Posterior vena cava (tissue), 2 donors: ENCODE measurements at regions of chr14 and their contacts with region 1.

Region 1: DNA sequence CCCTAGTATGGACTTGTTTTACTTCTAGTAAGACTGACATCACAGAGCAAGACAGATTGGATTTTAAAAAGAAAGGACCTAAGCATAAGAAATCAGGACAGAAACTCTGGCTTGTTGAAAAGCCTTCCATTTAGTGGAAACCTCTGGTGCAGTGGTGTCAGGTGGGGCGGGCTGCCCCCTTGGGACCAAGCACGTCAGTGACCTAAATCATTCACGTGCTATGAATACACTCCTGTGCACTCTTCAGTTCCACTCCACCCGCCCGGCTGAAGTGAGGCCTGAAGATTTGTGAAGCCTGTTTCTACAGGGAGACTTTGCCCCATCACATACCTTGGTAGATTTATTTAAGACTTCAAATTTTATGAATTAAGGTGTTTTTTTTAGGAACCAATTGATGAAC is 58.2 kb upstream of the STRN3 start:
- DNase-seq: no peak

Region 2: GRCh38 chr14:30840086-30840779 is 244.2 kb before region 1 on chr14:
- intact Hi-C with region 1: no loop called
- DNase-seq: no peak

Region 3: DNA sequence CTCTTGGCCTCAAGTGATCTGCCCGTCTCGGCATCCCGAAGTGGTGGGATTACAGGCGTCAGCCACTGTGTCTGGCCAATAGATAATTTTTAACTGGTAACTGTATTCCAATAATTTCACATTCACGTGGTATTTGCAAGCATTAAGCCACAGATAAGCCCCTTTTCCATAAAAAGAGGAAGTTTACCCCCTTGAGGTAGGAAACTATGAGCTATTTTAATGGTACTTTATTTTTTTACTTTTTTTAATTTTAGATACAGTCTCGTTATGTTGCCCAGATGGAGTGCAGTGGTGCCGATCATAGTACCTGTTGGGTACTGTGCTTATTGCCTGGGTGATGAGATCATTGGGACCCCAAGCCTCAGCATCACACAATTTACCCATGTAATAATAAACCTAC is 101.9 kb before region 1 on chr14:
- intact Hi-C with region 1: loop called (anchors 5 to 10 kb)
- DNase-seq: no peak

Region 4: DNA sequence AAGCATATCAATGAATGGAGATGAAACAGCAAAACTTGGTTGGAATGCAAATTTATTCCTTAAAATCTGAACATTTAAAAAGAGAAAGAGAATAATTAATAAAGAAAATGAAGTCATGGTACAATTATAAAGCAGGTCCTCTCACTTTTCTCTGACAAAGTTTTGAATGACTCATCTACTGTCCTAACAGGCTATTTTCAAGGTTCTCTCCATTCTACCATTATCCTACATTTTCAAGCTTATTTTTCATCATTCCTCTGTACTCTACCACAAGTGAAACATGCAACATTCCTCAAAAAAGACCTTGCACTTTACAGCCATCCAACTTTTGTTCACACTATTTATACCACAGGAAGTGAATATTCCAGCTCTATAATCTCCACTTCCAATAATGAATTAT is 95.9 kb before region 1 on chr14:
- intact Hi-C with region 1: loop called (anchors 5 to 10 kb)
- DNase-seq: no peak